CD14-positive monocyte (primary cell): ENCODE measurements at regions of chr2 and their contacts with region 1.

Region 1: GRCh38 chr2:102251042-102251848 is 60.1 kb upstream of the IL1RL1 start:
- DNase-seq: peak; percentile 55 to 70 (median 56)
- H3K4me3 ChIP-seq: peak overlapping the region; percentile 0 to 71 (median 1)
- H3K4me3 Mint-ChIP-seq: peak overlapping the region; percentile 79 to 92
- H3K27ac ChIP-seq: no peak overlapping the region
- H3K27ac Mint-ChIP-seq: peak overlapping the region in 3 of 7 donors; percentile 71 to 84 (median 81)
- H3K4me1 ChIP-seq: peaks cover 9 to 13% of the 10 kb centered on the region in 2 donors
- H3K4me1 Mint-ChIP-seq: peaks cover 13% of the 10 kb centered on the region
- H3K27me3 ChIP-seq: peaks cover 17 to 42% of the 10 kb centered on the region in 2 donors
- H3K27me3 Mint-ChIP-seq: peaks cover 41 to 57% (median 46%) of the 10 kb centered on the region in 3 donors
- CTCF ChIP-seq: peak; percentile 96

Region 2: DNA sequence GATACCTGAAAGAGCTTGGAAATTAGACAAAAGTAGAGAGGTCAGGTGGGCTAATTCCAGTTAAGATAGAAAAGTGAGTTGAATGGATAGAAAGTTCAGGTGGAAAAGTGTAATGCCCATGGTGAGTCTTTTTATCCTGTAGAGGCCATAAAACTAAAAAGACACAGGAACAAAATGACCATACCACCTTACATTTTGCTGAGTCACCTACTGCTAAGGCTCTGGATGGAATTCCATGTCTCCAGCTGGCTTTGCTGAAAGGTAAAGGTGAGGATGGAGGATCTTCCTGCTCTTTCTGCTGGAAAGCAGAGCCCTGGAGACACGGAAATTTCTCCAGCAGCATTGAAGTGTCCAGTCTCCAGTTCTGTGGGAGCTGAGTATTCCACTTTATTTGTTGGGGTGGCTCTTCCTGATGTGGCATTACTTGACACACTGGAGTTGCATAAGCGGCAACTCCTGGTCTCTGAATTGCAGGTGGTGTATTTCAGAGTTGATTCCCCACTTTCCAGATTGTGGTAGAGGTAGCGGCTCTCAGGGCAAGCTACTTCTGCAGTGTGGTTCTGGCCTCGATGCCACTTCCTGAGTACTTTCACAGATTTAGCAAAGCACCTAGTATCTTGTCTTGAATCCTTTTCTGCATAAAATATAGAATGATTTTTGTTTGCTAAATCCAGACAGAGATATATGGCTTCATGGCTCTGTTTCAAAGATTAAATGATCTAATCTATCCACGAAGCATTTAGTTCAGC is 53.7 kb before region 1 on chr2:
- intact Hi-C with region 1: no loop called
- DNase-seq: no peak
- H3K4me3 ChIP-seq: no peak overlapping the region
- H3K4me3 Mint-ChIP-seq: no peak overlapping the region
- H3K27ac ChIP-seq: no peak overlapping the region
- H3K27ac Mint-ChIP-seq: no peak overlapping the region
- H3K4me1 ChIP-seq: no peaks in the 10 kb centered on the region
- H3K4me1 Mint-ChIP-seq: no peaks in the 10 kb centered on the region
- H3K27me3 ChIP-seq: no peaks in the 10 kb centered on the region
- H3K27me3 Mint-ChIP-seq: peaks cover 6 to 9% (median 8%) of the 10 kb centered on the region in 3 donors
- CTCF ChIP-seq: no peak

Region 3: GRCh38 chr2:102313025-102313424 is 61.8 kb after region 1 on chr2:
- intact Hi-C with region 1: loop called in 1 of 2 experiments (anchors 10 kb)
- DNase-seq: no peak
- H3K4me3 ChIP-seq: no peak overlapping the region
- H3K4me3 Mint-ChIP-seq: peak overlapping the region in 1 of 2 donors; percentile 60
- H3K27ac ChIP-seq: no peak overlapping the region
- H3K27ac Mint-ChIP-seq: no peak overlapping the region
- H3K4me1 ChIP-seq: peaks cover 6 to 7% of the 10 kb centered on the region in 2 donors
- H3K4me1 Mint-ChIP-seq: peaks cover 13% of the 10 kb centered on the region
- H3K27me3 ChIP-seq: peaks cover 28 to 33% of the 10 kb centered on the region in 2 donors
- H3K27me3 Mint-ChIP-seq: peaks cover 36 to 49% (median 44%) of the 10 kb centered on the region in 3 donors
- CTCF ChIP-seq: no peak

Region 4: GRCh38 chr2:102355526-102356380 is 104.5 kb after region 1 on chr2 and contains the start of gene IL18R1:
- intact Hi-C with region 1: loop called (anchors 5 kb)
- DNase-seq: peak; percentile 43 to 75 (median 55)
- H3K4me3 ChIP-seq: peak within 1 kb of the TSS; percentile 38 to 72 (median 43)
- H3K4me3 Mint-ChIP-seq: peak within 1 kb of the TSS; percentile 78 to 93
- H3K27ac ChIP-seq: no peak within 1 kb of the TSS
- H3K27ac Mint-ChIP-seq: peak within 1 kb of the TSS in 1 of 7 donors; percentile 11
- H3K4me1 ChIP-seq: peaks cover 21 to 33% of the 10 kb centered on the region in 2 donors
- H3K4me1 Mint-ChIP-seq: peaks cover 21% of the 10 kb centered on the region
- H3K27me3 ChIP-seq: peaks cover 14 to 22% of the 10 kb centered on the region in 2 donors
- H3K27me3 Mint-ChIP-seq: peaks cover 28 to 40% (median 33%) of the 10 kb centered on the region in 3 donors
- CTCF ChIP-seq: peak; percentile 93
- polyA plus RNA-seq, gene IL18R1: 0.03 to 0.15 (median 0.11) TPM

Region 5: GRCh38 chr2:102442967-102443828 is 192.0 kb after region 1 on chr2:
- intact Hi-C with region 1: loop called (anchors 5 kb)
- DNase-seq: peak; percentile 18 to 48 (median 29)
- H3K4me3 ChIP-seq: no peak overlapping the region
- H3K4me3 Mint-ChIP-seq: peak overlapping the region in 1 of 2 donors; percentile 51
- H3K27ac ChIP-seq: no peak overlapping the region
- H3K27ac Mint-ChIP-seq: no peak overlapping the region
- H3K4me1 ChIP-seq: peaks cover 4 to 6% of the 10 kb centered on the region in 2 donors
- H3K4me1 Mint-ChIP-seq: peaks cover 5% of the 10 kb centered on the region
- H3K27me3 ChIP-seq: peaks cover 0 to 3% of the 10 kb centered on the region in 2 donors
- H3K27me3 Mint-ChIP-seq: peaks cover 0 to 3% (median 1%) of the 10 kb centered on the region in 3 donors
- CTCF ChIP-seq: peak; percentile 82

Region 6: GRCh38 chr2:102449370-102449974 is 198.2 kb after region 1 on chr2:
- intact Hi-C with region 1: loop called (anchors 5 kb)
- DNase-seq: peak; percentile 19 to 52 (median 40)
- H3K4me3 ChIP-seq: no peak overlapping the region
- H3K4me3 Mint-ChIP-seq: no peak overlapping the region
- H3K27ac ChIP-seq: no peak overlapping the region
- H3K27ac Mint-ChIP-seq: no peak overlapping the region
- H3K4me1 ChIP-seq: no peaks in the 10 kb centered on the region
- H3K4me1 Mint-ChIP-seq: no peaks in the 10 kb centered on the region
- H3K27me3 ChIP-seq: no peaks in the 10 kb centered on the region
- H3K27me3 Mint-ChIP-seq: peaks cover 2 to 5% (median 3%) of the 10 kb centered on the region in 3 donors
- CTCF ChIP-seq: peak; percentile 81